PC-3 (cell line): ENCODE measurements at regions of chr6 and their contacts with region 1.

Region 1: DNA sequence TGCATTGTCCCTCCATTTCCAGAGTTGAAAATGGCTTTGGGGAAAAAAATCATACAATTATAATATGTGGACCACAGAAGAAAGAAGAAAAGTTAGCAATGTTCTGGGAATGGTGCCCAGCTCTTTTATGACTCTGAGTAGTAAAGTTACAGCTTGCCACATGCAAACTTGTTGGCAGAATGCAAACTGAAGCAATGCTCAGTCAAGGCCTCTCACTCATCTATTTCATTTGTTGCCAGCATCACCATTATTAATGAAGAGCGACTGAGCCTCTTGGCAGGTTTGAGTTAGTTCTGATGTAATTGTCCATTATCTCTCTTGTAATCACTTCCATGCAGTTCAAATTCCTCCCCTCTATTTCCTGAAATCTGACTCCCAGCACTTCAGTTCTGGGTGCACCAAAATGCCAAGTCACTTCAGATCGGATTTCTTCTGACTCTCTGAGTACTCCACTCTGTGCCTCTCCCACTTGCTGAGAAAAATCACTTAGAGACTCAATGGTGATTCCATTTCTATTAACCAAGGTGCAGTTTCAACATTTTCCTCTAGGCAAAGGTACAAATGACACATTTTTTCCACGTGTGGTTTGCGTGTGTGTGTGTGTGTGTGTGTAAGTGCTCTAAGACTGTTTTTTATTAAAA is 154.4 kb upstream of the STMND1 start:
- DNase-seq: peak; percentile 86
- ATAC-seq: peak; percentile 96
- H3K4me3 ChIP-seq: peak overlapping the region; percentile 20; the same call in 1 of the 2 replicates
- H3K27ac ChIP-seq: peak overlapping the region; percentile 90
- H3K4me1 ChIP-seq: peaks cover 22% of the 10 kb centered on the region
- H3K27me3 ChIP-seq: no peaks in the 10 kb centered on the region
- CTCF ChIP-seq: no peak

Region 2: GRCh38 chr6:16901782-16902181 is 45.7 kb before region 1 on chr6:
- CTCF ChIA-PET with region 1: no interaction called
- POLR2A ChIA-PET with region 1: interaction called, 3 read pairs
- intact Hi-C with region 1: loop called (anchors 5 kb)
- DNase-seq: peak; percentile 75
- ATAC-seq: peak; percentile 79
- H3K4me3 ChIP-seq: no peak overlapping the region
- H3K27ac ChIP-seq: no peak overlapping the region
- H3K4me1 ChIP-seq: 0 out of 2 replicates have a peak, but pooled peaks cover 7% of the 10 kb centered on the region
- H3K27me3 ChIP-seq: no peaks in the 10 kb centered on the region
- CTCF ChIP-seq: no peak